Posterior vena cava (tissue), 2 donors: ENCODE measurements at regions of chr11 and their contacts with region 1.

Region 1: GRCh38 chr11:63042596-63042995 is 27.0 kb upstream of the SLC22A8 start:
- DNase-seq: no peak

Region 2: GRCh38 chr11:62508268-62509058 is 534.1 kb before region 1 on chr11:
- intact Hi-C with region 1: loop called in 1 of 2 experiments (anchors 5 kb)
- DNase-seq: peak; percentile 86